WTC11 (cell line): ENCODE measurements at regions of chr11 and their contacts with region 1.

Region 1: GRCh38 chr11:72573072-72573854 is 101.0 kb downstream of the PDE2A start:
- DNase-seq: peak; percentile 78
- ATAC-seq: peak; percentile 96
- H3K4me3 Mint-ChIP-seq: no peak overlapping the region
- H3K27ac Mint-ChIP-seq: no peak overlapping the region
- H3K4me1 Mint-ChIP-seq: peaks cover 4% of the 10 kb centered on the region; the same call in 1 of the 2 replicates
- H3K27me3 Mint-ChIP-seq: peaks cover 21% of the 10 kb centered on the region
- CTCF ChIP-seq: peak; percentile 60

Region 2: GRCh38 chr11:72338741-72339140 is 234.5 kb before region 1 on chr11:
- CTCF ChIA-PET with region 1: no interaction called
- POLR2A ChIA-PET with region 1: no interaction called
- DNase-seq: no peak
- ATAC-seq: no peak
- H3K4me3 Mint-ChIP-seq: no peak overlapping the region
- H3K27ac Mint-ChIP-seq: no peak overlapping the region
- H3K4me1 Mint-ChIP-seq: peaks cover 6% of the 10 kb centered on the region
- H3K27me3 Mint-ChIP-seq: no peaks in the 10 kb centered on the region
- CTCF ChIP-seq: no peak

Region 3: GRCh38 chr11:72454791-72455190 is 118.5 kb before region 1 on chr11:
- CTCF ChIA-PET with region 1: interaction called, 21 read pairs
- POLR2A ChIA-PET with region 1: no interaction called
- DNase-seq: peak; percentile 17
- ATAC-seq: peak; percentile 67; the same call in 1 of the 2 replicates
- H3K4me3 Mint-ChIP-seq: no peak overlapping the region
- H3K27ac Mint-ChIP-seq: no peak overlapping the region
- H3K4me1 Mint-ChIP-seq: 0 out of 2 replicates have a peak, but pooled peaks cover 2% of the 10 kb centered on the region
- H3K27me3 Mint-ChIP-seq: peaks cover 8% of the 10 kb centered on the region
- CTCF ChIP-seq: no peak

Region 4: DNA sequence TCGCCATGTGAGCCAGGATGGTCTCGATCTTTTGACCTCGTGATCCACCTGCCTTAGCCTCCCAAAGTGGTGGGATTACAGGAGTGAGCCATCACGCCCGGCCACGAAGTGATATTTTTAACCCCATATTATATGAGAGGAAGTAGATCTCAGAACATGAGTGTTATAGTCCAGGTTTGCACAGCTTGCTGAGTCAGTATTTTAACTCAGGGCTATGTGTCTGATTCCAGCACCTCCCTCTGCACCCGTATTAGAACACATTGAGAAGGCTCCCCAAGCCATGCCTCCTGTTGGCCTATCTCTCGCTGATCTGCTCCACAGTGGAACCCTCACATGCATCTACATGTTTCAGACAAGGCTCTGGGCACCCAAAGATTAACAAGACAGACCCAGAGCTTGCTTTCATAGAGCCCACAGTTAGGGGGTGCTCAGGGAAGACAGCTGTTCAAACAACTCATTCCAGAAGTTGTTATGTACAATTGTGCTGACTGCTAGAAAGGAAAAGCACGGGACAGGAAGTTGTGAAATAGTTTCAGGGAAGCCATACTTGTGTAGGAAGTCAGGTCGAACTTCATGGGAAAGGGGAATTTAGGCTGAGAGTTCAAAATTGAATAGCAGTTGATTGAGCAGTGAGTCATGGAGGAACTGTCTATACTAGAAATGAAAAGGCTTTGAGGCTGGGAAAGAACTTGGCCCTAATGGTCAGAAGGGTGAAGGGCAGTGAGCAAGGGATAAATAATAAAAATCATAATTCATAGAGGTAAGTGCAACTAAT is 89.7 kb before region 1 on chr11:
- CTCF ChIA-PET with region 1: interaction called, 10 read pairs
- POLR2A ChIA-PET with region 1: no interaction called
- DNase-seq: no peak
- ATAC-seq: no peak
- H3K4me3 Mint-ChIP-seq: no peak overlapping the region
- H3K27ac Mint-ChIP-seq: no peak overlapping the region
- H3K4me1 Mint-ChIP-seq: no peaks in the 10 kb centered on the region
- H3K27me3 Mint-ChIP-seq: no peaks in the 10 kb centered on the region
- CTCF ChIP-seq: no peak